ENCODE measurements at regions of chr11 and their contacts with region 1.

Region 1: GRCh38 chr11:111841370-111842053 is 29.9 kb downstream of the ALG9 start:
- DNase-seq: peak; percentile 54 to 94
- H3K4me3 ChIP-seq: no peak overlapping the region
- H3K27ac ChIP-seq: no peak overlapping the region
- H3K4me1 ChIP-seq: peaks cover 0 to 2% of the 10 kb centered on the region in 2 donors
- H3K27me3 ChIP-seq: no peaks in the 10 kb centered on the region
- CTCF ChIP-seq: peak; percentile 78 to 85 (median 85)

Region 2: DNA sequence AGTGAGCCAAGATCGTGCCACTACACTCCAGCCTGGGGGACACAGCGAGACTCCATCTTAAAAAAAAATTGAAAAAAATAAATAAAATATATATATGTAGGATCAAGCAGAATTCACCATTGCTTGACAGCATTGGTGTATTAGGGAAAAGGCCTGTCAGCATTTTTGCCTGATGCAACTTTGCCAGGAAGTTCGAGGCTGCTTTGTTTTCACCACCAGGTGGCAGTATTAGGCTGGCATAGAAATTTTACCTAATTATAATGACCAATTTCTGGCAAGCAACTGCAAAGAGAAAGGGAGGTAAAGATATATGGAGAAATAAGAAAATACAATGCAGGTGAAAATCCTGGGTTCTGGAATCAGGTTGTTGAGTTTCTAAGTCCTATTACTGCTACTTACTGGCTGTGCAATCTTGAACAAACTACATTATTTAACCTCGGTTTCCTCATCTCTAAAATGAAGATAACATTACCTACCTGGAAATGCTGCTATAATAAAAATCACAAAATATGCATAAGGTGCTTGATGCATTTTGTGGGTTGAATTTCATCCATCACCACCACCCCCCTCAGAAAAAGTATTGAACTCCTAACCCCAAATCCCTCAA is 276.3 kb before region 1 on chr11:
- intact Hi-C with region 1: loop called (anchors 1 kb)
- DNase-seq: peak in 1 of 2 donors; percentile 85
- H3K4me3 ChIP-seq: no peak overlapping the region
- H3K27ac ChIP-seq: no peak overlapping the region
- H3K4me1 ChIP-seq: no peaks in the 10 kb centered on the region
- H3K27me3 ChIP-seq: no peaks in the 10 kb centered on the region
- CTCF ChIP-seq: peak; percentile 70 to 92 (median 90)

Region 3: DNA sequence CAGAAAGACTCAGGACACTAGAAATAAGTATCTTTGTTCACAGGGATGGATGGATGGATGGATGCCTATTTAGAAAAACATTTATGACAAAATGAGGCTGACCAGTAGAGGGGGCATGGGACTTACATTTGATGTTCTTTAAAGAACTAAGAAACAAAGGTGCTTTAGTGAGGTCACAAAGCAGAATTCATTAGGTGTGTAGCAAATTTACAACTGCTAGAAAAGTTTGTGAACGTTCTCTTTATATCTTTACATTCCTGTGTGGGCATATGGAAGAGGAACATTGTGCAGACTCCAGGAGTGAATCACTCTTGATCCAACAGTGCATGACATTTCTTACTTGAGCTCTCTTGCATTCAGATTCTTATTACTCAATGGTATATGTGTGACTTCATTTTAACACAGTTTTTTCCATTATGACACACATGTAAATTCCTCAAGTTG is 255.1 kb before region 1 on chr11:
- intact Hi-C with region 1: loop called (anchors 5 kb)
- DNase-seq: no peak
- H3K4me3 ChIP-seq: no peak overlapping the region
- H3K27ac ChIP-seq: no peak overlapping the region
- H3K4me1 ChIP-seq: no peaks in the 10 kb centered on the region
- H3K27me3 ChIP-seq: no peaks in the 10 kb centered on the region
- CTCF ChIP-seq: peak; percentile 37 to 65 (median 50)